ENCODE measurements at regions of chr6 and their contacts with region 1.

Region 1: GRCh38 chr6:134938896-134939295 is 11.0 kb downstream of the ALDH8A1 start:
- DNase-seq: no peak
- ATAC-seq: no peak
- H3K4me3 ChIP-seq: no peak overlapping the region
- H3K27ac ChIP-seq: peak overlapping the region in 1 of 2 experiments; percentile 49; a peak in 1 of 6 replicates
- H3K4me1 ChIP-seq: peaks cover 36% of the 10 kb centered on the region
- CTCF ChIP-seq: no peak
- EP300 ChIP-seq: no peak
- POLR2A ChIP-seq: no peak
- RAD21 ChIP-seq: no peak

Region 2: DNA sequence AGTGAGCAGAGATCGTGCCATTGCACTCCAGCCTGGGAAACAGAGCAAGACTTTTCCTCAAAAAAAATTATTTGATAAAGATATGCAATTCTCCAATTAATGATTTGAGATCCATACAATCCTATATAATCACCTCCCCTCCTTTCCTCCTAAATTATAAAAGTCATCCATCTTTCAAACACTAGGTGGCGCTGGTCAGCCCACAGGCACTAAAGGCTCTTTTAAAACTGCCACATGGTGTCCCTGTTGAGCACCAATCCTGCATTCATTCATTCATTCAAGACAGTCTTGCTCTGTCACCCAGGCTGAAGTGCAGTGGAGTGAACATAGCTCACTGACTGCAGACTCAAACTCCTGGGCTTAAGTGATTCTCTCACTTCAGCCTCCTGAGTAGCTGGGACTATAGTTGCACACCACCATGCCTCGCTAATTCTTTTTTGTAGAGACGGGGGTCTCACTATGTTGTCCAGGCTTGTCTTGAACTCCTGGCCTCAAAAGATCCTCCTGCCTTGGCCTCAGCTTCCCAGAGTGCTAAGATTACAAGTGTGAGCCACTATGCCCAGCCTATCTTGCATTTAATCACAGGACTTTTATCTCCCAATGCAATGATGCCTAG is 827.7 kb before region 1 on chr6:
- CTCF ChIA-PET with region 1: interaction called, 12 read pairs
- POLR2A ChIA-PET with region 1: no interaction called
- DNase-seq: peak; percentile 53 to 72
- ATAC-seq: peak; percentile 14 to 44; a peak in 3 of 6 replicates
- H3K4me3 ChIP-seq: no peak overlapping the region
- H3K27ac ChIP-seq: no peak overlapping the region; a peak in 1 of 6 replicates
- H3K4me1 ChIP-seq: peaks cover 27% of the 10 kb centered on the region
- CTCF ChIP-seq: peak; percentile 75
- EP300 ChIP-seq: no peak
- POLR2A ChIP-seq: no peak
- RAD21 ChIP-seq: peak; percentile 32 to 46; a peak in 2 of 5 replicates

Region 3: GRCh38 chr6:134123666-134124208 is 815.2 kb before region 1 on chr6:
- CTCF ChIA-PET with region 1: interaction called, 32 read pairs
- POLR2A ChIA-PET with region 1: no interaction called
- DNase-seq: peak; percentile 19 to 90
- ATAC-seq: peak; percentile 98 to 99
- H3K4me3 ChIP-seq: no peak overlapping the region
- H3K27ac ChIP-seq: peak overlapping the region; percentile 39 to 40; a peak in 3 of 6 replicates
- H3K4me1 ChIP-seq: no peaks in the 10 kb centered on the region
- CTCF ChIP-seq: peak; percentile 78
- EP300 ChIP-seq: no peak
- POLR2A ChIP-seq: no peak
- RAD21 ChIP-seq: peak; percentile 54 to 56

Region 4: GRCh38 chr6:134161036-134161435 is 777.9 kb before region 1 on chr6:
- CTCF ChIA-PET with region 1: interaction called, 18 read pairs
- POLR2A ChIA-PET with region 1: no interaction called
- DNase-seq: no peak
- ATAC-seq: no peak
- H3K4me3 ChIP-seq: no peak overlapping the region
- H3K27ac ChIP-seq: peak overlapping the region; percentile 21 to 37; a peak in 1 of 6 replicates
- H3K4me1 ChIP-seq: peaks cover 5% of the 10 kb centered on the region; the same call in 1 of the 3 replicates
- CTCF ChIP-seq: no peak
- EP300 ChIP-seq: no peak
- POLR2A ChIP-seq: no peak
- RAD21 ChIP-seq: no peak

Region 5: GRCh38 chr6:134166511-134167261 is 772.2 kb before region 1 on chr6:
- CTCF ChIA-PET with region 1: interaction called, 15 read pairs
- POLR2A ChIA-PET with region 1: no interaction called
- DNase-seq: peak in 1 of 2 experiments; percentile 18
- ATAC-seq: peak; percentile 26 to 49; a peak in 3 of 6 replicates
- H3K4me3 ChIP-seq: no peak overlapping the region
- H3K27ac ChIP-seq: no peak overlapping the region
- H3K4me1 ChIP-seq: peaks cover 30% of the 10 kb centered on the region; the same call in 2 of the 3 replicates
- CTCF ChIP-seq: no peak
- EP300 ChIP-seq: no peak
- POLR2A ChIP-seq: no peak
- RAD21 ChIP-seq: no peak

Region 6: GRCh38 chr6:134822920-134823709 is 115.8 kb before region 1 on chr6:
- CTCF ChIA-PET with region 1: interaction called, 13 read pairs
- POLR2A ChIA-PET with region 1: no interaction called
- DNase-seq: peak; percentile 66 to 82
- ATAC-seq: peak; percentile 100
- H3K4me3 ChIP-seq: no peak overlapping the region
- H3K27ac ChIP-seq: peak overlapping the region; percentile 61 to 86
- H3K4me1 ChIP-seq: peaks cover 6% of the 10 kb centered on the region; the same call in 2 of the 3 replicates
- CTCF ChIP-seq: peak; percentile 89
- EP300 ChIP-seq: no peak
- POLR2A ChIP-seq: no peak
- RAD21 ChIP-seq: peak; percentile 97

Region 7: GRCh38 chr6:134908906-134909516 is 29.9 kb before region 1 on chr6:
- CTCF ChIA-PET with region 1: interaction called, 11 read pairs
- POLR2A ChIA-PET with region 1: no interaction called
- DNase-seq: peak; percentile 58 to 84
- ATAC-seq: peak; percentile 96 to 97
- H3K4me3 ChIP-seq: peak overlapping the region; percentile 21; the same call in 2 of the 3 replicates
- H3K27ac ChIP-seq: peak overlapping the region; percentile 85 to 92
- H3K4me1 ChIP-seq: peaks cover 32% of the 10 kb centered on the region
- CTCF ChIP-seq: no peak
- EP300 ChIP-seq: peak; percentile 22 to 64; a peak in 2 of 5 replicates
- POLR2A ChIP-seq: no peak
- RAD21 ChIP-seq: no peak

Region 8: DNA sequence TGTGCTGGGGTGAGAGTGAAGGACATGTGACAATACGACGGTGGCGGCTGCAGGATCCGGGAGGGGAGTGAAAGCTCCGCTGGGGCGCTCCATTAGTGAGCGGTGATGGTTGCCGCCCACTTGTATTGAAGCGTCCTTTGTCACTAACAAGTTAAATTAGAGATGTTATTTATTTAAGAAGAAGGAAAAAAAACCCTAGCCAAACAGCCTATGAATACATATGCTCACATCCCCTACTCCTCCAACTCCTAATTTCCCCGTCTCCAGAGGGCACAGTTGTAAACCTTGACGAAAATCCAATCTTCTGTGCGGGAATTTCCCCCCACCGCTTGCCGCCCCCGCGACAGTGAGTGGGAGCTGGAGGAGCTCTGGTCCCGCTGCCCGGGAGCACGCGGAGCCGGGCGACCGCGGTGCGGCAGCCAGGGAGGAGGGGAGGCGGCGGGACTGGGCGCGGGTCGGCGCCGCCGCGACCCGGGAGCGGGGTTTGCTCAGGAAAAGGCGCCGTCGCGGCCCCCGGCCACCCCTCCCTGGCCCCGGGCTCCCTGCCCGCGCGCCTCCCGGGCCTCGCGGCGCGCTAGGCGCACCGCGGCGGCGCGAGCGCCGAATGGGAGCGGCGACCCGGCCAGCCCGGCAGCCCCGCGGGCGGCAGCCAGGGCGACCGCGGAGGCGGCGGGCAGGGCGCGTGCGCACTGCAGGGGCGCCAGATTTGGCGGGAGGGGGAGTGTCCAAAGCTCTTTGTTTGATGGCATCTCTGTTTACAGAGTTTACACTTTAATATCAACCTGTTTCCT is 241.8 kb after region 1 on chr6 and contains the start of gene MYB:
- CTCF ChIA-PET with region 1: no interaction called
- POLR2A ChIA-PET with region 1: no interaction called
- DNase-seq: peak; percentile 59 to 64
- ATAC-seq: peak; percentile 71 to 80
- H3K4me3 ChIP-seq: peak within 1 kb of the TSS; percentile 94
- H3K27ac ChIP-seq: peak within 1 kb of the TSS; percentile 85 to 90
- H3K4me1 ChIP-seq: no peaks in the 10 kb centered on the region
- CTCF ChIP-seq: no peak
- EP300 ChIP-seq: no peak
- POLR2A ChIP-seq: no peak
- RAD21 ChIP-seq: no peak
- polyA plus RNA-seq, gene MYB: 0.22 and 0.24 TPM in 2 replicates

Region 9: GRCh38 chr6:135191508-135192255 is 252.8 kb after region 1 on chr6:
- CTCF ChIA-PET with region 1: no interaction called
- POLR2A ChIA-PET with region 1: no interaction called
- DNase-seq: no peak
- ATAC-seq: no peak
- H3K4me3 ChIP-seq: no peak overlapping the region
- H3K27ac ChIP-seq: no peak overlapping the region
- H3K4me1 ChIP-seq: no peaks in the 10 kb centered on the region
- CTCF ChIP-seq: no peak
- EP300 ChIP-seq: no peak
- POLR2A ChIP-seq: no peak
- RAD21 ChIP-seq: no peak

Region 10: DNA sequence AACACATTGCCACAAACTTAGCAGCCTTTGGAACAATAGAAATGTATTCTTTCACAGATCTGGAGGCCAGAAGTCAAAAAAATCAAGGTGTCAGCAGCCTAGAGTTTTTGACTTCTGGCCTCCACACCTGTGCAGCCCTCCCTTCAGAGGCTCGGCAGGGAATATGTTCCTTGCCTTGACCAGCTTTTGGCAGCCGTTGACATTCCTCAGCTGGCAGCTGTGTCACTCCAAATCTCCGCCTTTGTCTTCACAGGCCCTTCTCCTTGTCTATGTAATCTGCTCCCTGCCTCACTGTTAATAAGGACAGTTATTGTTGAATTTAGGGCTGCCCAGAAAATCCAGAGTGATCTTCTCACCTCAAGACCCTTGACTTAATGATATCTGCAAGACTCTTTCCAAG is 575.8 kb after region 1 on chr6:
- CTCF ChIA-PET with region 1: no interaction called
- POLR2A ChIA-PET with region 1: no interaction called
- DNase-seq: no peak
- ATAC-seq: no peak
- H3K4me3 ChIP-seq: no peak overlapping the region
- H3K27ac ChIP-seq: no peak overlapping the region
- H3K4me1 ChIP-seq: no peaks in the 10 kb centered on the region
- CTCF ChIP-seq: no peak
- EP300 ChIP-seq: no peak
- POLR2A ChIP-seq: no peak
- RAD21 ChIP-seq: no peak